Right ventricle myocardium inferior (tissue), 1 donor: ENCODE measurements at regions of chr7 and their contacts with region 1.

Region 1: DNA sequence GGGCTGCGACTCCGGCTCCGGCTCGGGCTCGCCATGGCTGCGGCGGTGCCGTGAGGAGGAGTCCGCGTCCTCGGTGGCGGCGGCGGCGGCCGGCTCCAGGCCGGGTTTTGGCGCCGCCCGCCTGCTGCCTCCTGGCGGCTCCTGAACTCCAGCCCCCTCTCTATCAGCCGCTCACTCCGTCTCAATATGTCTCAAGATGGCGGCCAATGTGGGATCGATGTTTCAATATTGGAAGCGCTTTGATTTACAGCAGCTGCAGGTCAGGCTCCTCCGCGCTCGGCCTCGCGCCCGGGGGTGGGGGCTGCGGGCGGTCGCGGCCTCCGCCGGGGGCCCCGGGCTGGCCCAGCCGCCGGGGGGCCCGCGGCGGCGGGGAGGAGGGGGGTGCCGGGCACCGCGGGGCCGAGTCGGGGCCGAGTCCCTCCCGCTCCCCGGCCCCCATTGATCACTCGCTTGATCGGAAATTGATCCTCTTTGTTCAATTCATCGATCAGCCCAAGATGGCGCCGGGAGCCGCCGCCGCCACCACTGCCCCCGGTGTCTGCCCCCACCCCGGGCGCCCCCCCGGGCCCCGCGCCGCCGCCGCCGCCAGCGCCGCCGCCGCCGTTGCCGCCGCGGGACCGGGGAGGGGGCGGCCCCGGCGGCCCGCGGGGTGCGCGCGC is 1.5 kb upstream of the CUX1 start:
- DNase-seq: peak; percentile 87
- ATAC-seq: peak; percentile 82

Region 2: DNA sequence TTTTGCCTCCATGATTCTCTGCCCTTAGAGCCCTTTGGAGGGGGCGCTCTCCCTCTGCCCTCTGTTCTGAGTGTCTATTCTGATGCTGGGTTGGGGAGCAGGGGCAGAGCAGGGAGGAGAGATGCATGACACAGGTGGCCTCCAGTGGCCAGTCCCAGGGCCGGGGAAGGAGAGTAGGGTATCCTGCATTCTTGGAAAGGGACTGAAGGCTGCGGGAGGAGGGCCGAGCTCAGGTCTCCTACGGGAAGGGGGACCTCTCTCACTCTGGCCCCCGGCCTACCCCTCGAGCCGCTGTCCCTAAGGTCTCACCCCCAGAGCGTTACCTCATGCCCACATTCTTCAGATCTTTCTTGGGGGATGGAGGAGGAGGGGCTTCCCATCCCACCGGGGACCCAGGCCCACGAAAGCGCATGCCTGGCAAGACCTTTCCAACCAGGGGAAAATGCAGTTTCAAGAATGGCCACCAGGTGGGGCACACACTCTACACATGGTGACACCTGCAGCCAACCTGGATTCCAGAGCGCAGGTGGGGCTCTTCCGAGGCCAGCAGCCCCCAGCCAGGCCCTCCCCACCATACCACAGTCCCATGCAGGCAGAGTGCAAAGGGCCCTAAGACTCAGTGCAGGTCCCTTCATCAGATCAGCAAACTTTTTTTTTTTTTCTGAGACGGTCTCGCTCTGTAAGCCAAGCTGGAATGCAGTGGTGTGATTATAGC is 273.3 kb before region 1 on chr7:
- intact Hi-C with region 1: loop called (anchors 5 kb)
- DNase-seq: no peak
- ATAC-seq: no peak

Region 3: GRCh38 chr7:101650579-101651081 is 165.3 kb before region 1 on chr7:
- intact Hi-C with region 1: no loop called
- DNase-seq: no peak
- ATAC-seq: no peak

Region 4: GRCh38 chr7:101688183-101688831 is 127.7 kb before region 1 on chr7:
- intact Hi-C with region 1: loop called (anchors 1 kb)
- DNase-seq: peak; percentile 93
- ATAC-seq: peak; percentile 91

Region 5: GRCh38 chr7:101754424-101755159 is 61.4 kb before region 1 on chr7:
- intact Hi-C with region 1: no loop called
- DNase-seq: no peak
- ATAC-seq: no peak

Region 6: DNA sequence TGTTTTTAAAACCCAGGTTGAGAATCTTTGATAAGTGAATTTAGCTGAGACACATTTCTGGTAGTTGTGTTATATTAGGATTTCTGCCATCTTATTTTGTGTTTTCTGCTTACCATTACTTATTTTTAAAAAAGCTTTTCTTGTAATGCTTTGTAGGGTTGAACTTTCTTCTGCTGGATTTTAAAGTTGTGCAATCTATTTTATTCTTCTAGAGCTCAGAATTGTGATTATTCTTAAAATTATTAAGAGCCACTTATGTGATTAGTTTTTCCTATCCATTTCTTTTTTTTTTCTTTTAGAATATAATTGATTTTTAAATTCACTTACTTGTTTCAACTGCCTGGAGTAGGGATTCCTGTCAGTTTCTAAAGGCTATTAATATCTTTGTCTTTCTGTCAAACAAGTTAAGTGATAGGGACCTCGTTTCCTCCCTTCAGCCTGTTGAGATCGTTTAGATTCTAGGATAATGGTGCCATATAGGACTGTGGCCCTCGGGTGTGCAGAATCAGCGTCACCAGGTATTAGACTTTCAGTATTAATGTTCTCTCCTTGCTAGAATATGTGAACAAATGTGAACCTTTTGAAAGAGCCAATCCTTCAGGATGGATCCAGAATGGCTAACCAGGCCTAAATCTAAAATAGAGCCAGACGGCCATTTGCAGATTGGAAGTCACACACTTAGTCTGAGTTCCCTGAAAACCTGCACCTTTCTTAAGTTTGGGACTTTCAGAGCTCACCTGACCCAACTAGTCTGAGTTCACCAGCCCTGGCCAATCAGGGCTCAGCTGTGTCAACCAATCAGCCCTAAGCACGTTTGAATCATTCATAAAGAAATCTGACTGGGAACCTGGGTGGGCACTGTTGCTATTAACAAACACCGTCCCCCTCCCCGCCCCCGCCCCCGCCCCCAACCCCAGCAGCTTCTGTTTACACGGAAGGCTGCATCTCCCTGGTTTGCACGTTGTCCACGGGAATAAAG is 27.6 kb after region 1 on chr7:
- intact Hi-C with region 1: loop called (anchors 2 kb)
- DNase-seq: no peak
- ATAC-seq: no peak

Region 7: DNA sequence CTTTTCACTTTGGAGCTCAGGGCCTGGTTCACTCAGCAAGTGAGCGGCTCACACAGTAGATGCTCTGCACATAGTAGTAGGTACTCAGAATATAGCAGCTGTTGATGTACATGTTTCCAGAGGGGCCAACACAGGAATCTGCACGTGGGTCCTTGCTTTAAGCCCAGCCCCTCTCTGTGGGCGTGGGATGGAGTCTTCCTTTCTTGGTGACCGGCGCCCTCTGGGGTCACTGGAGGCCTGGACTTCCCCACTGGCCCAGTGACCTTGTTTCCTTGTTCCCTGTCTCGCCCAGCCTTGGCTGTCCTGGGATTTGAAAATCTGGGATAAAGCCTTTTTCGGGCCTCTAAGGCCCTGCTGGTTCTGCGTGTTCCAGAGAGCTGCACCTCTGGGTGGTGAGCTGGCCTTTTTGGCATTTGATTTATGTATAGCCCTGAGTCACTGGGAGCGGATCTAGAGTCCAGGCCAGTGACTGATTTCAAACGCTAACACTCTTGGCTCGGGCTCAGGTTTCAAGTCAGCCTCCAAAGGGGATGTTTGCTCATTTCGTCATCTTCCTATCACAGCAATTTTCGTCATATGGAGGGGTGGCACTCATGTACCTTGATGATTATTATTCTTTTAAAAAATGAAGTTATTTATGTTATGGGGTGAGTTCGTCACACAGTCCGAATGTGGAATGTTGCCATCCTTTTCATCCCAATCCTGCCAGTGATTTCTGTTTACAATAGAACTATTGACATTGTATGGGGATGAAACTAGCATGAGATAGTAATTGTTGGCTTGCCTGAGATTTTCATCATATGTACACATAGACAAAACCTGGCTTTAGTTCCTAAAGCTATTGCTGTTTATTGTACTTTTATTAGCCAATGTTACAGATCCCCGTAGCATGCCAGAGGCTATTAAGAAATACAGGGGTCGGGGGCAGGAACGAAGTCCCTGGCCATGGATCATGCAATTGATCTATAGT is 66.9 kb after region 1 on chr7:
- intact Hi-C with region 1: no loop called
- DNase-seq: peak; percentile 82
- ATAC-seq: peak; percentile 95

Region 8: GRCh38 chr7:101924171-101924570 is 108.2 kb after region 1 on chr7:
- intact Hi-C with region 1: no loop called
- DNase-seq: no peak
- ATAC-seq: peak; percentile 59

Region 9: DNA sequence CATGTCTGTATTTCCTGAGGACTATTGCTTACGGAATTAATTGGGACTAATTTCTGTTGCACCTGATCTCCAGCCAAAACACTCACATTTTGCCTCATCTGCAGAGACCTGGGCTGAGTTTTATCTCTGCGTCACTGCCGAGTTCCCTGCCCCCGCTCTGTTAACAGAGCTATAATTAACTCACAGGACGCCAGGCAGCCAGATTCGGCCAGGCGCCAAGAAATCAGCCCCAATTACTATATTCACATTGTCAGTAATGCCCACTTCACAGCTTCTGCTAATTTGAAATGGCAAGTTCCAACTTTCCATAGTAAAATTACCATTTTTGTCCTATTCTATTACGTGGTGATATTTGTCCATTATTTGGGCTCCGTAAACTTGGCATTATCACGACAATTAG is 131.9 kb after region 1 on chr7:
- intact Hi-C with region 1: loop called (anchors 5 kb)
- DNase-seq: peak; percentile 81
- ATAC-seq: peak; percentile 56

Region 10: DNA sequence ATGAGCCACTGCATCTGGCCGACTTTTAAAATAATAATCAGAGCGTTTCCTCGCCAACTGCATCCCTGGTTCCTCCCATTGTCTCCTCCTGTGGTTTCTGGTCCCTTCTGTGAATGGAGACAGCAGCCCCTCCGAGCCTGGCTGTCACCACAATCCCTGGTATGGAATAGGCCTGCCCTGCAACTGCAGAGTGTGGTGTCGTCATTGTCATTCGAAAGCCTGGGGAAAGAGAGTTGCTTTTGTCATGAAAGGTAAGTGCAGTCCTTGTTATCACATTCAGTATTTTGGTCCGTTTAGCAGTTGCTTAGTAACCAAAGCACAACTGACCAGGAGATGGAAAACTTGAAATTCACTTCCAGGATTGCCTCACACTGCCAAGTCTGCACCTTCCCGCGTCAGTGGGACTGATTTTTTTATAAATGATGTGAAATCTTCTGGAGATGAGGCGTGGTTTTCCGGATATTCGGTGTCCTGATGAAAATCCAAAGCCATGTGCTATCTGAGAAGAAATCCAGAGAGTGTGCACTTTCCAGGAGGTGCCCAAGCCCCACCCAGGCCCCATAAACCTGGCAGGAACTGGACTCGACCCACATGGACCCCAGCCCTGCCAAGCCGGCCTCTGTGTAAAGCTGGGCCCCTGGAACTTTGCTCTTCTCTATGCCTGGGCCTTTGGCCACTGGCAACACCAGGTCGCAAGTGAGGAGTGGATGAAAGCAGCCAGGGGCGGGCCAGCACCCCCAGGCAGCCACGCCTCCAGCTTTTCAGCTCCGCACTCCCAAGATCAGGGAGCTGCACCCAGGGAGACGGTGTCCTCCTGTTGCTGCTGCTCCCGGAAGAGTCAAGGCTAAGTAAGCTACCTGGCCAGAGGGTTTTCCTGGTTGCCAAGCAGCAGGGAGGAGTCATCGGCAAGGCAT is 337.0 kb after region 1 on chr7:
- intact Hi-C with region 1: loop called (anchors 5 kb)
- DNase-seq: no peak
- ATAC-seq: peak; percentile 89